Activated T-helper 1 cell treated with anti-CD3 and anti-CD28 coated beads, Interleukin-12 subunit alpha, Interleukin-12 subunit beta, Interleukin-2, Interleukin-4 antibody, amounts not matched to agents 30 ng/mL and 10 ng/mL and 1 ng/mL, durations not matched to agents 14 hours and 24 hours and 36 hours (primary cell): ENCODE measurements at regions of chr11 and their contacts with region 1.

Region 1: GRCh38 chr11:62726915-62727763 is at the start of gene HNRNPUL2:
- DNase-seq: peak; percentile 99
- H3K4me3 Mint-ChIP-seq: peak within 1 kb of the TSS; percentile 91
- H3K27ac Mint-ChIP-seq: peak within 1 kb of the TSS; percentile 99
- H3K4me1 Mint-ChIP-seq: peaks cover 45% of the 10 kb centered on the region
- H3K27me3 Mint-ChIP-seq: no peaks in the 10 kb centered on the region
- total RNA-seq, gene HNRNPUL2: 53.0 and 55.2 TPM in 2 replicates

Region 2: GRCh38 chr11:62601394-62602140 is 125.6 kb before region 1 on chr11 and contains the start of gene MTA2:
- intact Hi-C with region 1: loop called (anchors 1 kb)
- DNase-seq: peak; percentile 100
- H3K4me3 Mint-ChIP-seq: peak within 1 kb of the TSS; percentile 95
- H3K27ac Mint-ChIP-seq: peak within 1 kb of the TSS; percentile 92
- H3K4me1 Mint-ChIP-seq: peaks cover 54% of the 10 kb centered on the region
- H3K27me3 Mint-ChIP-seq: no peaks in the 10 kb centered on the region
- total RNA-seq, gene MTA2: 224 and 230 TPM in 2 replicates

Region 3: GRCh38 chr11:62671575-62672389 is 55.4 kb before region 1 on chr11 and contains the starts of genes LBHD1 and UQCC3:
- intact Hi-C with region 1: loop called (anchors 1 kb)
- DNase-seq: peak; percentile 75
- H3K4me3 Mint-ChIP-seq: peak within 1 kb of the TSS; percentile 97
- H3K27ac Mint-ChIP-seq: peak within 1 kb of the TSS; percentile 98
- H3K4me1 Mint-ChIP-seq: peaks cover 34% of the 10 kb centered on the region
- H3K27me3 Mint-ChIP-seq: no peaks in the 10 kb centered on the region
- total RNA-seq, gene LBHD1: 23.4 and 24.3 TPM in 2 replicates
- total RNA-seq, gene UQCC3: 8.9 and 11.4 TPM in 2 replicates

Region 4: DNA sequence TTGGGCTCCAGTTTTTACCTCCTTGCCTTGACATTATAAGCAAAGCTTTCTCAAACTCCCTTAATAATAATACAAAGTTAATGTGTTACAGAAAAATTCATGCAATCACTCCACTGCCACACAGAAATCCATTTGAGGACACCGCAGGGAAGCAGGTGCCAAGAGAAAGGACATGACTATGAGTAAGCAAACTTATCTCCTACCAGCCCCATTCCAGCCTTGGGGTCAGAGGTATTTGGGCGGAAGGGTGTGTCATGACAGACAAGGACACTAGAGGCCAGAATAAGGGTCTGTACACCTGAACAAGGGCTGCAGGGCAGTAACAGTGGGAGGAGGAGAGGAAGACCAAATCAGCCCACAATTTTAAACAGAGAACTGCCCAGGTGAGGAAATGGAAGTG is 13.8 kb before region 1 on chr11:
- intact Hi-C with region 1: loop called (anchors 1 kb)
- DNase-seq: no peak
- H3K4me3 Mint-ChIP-seq: peak overlapping the region; percentile 75
- H3K27ac Mint-ChIP-seq: peak overlapping the region; percentile 95
- H3K4me1 Mint-ChIP-seq: peaks cover 87% of the 10 kb centered on the region
- H3K27me3 Mint-ChIP-seq: no peaks in the 10 kb centered on the region

Region 5: GRCh38 chr11:62787005-62787759 is 60.0 kb after region 1 on chr11 and contains the start of gene TMEM179B:
- intact Hi-C with region 1: loop called (anchors 1 kb)
- DNase-seq: peak; percentile 96
- H3K4me3 Mint-ChIP-seq: peak within 1 kb of the TSS; percentile 95
- H3K27ac Mint-ChIP-seq: peak within 1 kb of the TSS; percentile 94
- H3K4me1 Mint-ChIP-seq: peaks cover 42% of the 10 kb centered on the region
- H3K27me3 Mint-ChIP-seq: no peaks in the 10 kb centered on the region
- total RNA-seq, gene TMEM179B: 40.6 and 43.0 TPM in 2 replicates

Region 6: GRCh38 chr11:62841361-62842184 is 114.4 kb after region 1 on chr11:
- intact Hi-C with region 1: loop called (anchors 1 kb)
- DNase-seq: peak; percentile 83
- H3K4me3 Mint-ChIP-seq: no peak overlapping the region
- H3K27ac Mint-ChIP-seq: no peak overlapping the region
- H3K4me1 Mint-ChIP-seq: peaks cover 18% of the 10 kb centered on the region
- H3K27me3 Mint-ChIP-seq: no peaks in the 10 kb centered on the region